ENCODE measurements at regions of chr17 and their contacts with region 1.

Region 1: GRCh38 chr17:49567871-49568694 is 7.6 kb upstream of the NXPH3 start:
- DNase-seq: peak; percentile 97 to 99
- H3K4me3 ChIP-seq: peak overlapping the region; percentile 41
- H3K4me3 Mint-ChIP-seq: peak overlapping the region; percentile 73
- H3K27ac Mint-ChIP-seq: no peak overlapping the region
- H3K4me1 ChIP-seq: peaks cover 4% of the 10 kb centered on the region
- H3K4me1 Mint-ChIP-seq: peaks cover 7% of the 10 kb centered on the region
- H3K27me3 ChIP-seq: no peaks in the 10 kb centered on the region; the same call in 1 of the 2 replicates
- H3K27me3 Mint-ChIP-seq: peaks cover 19% of the 10 kb centered on the region
- CTCF ChIP-seq: peak; percentile 99 to 100

Region 2: GRCh38 chr17:49361902-49362722 is 206.0 kb before region 1 on chr17 and contains the start of gene ZNF652:
- CTCF ChIA-PET with region 1: no interaction called
- POLR2A ChIA-PET with region 1: no interaction called
- intact Hi-C with region 1: no loop called
- DNase-seq: peak; percentile 100
- H3K4me3 ChIP-seq: peak within 1 kb of the TSS; percentile 64
- H3K4me3 Mint-ChIP-seq: peak within 1 kb of the TSS; percentile 77
- H3K27ac Mint-ChIP-seq: peak within 1 kb of the TSS; percentile 76
- H3K4me1 ChIP-seq: peaks cover 26% of the 10 kb centered on the region
- H3K4me1 Mint-ChIP-seq: peaks cover 27% of the 10 kb centered on the region
- H3K27me3 ChIP-seq: no peaks in the 10 kb centered on the region
- H3K27me3 Mint-ChIP-seq: no peaks in the 10 kb centered on the region
- CTCF ChIP-seq: no peak
- total RNA-seq, gene ZNF652: 89.3 and 92.6 TPM in 2 replicates

Region 3: GRCh38 chr17:49471089-49471683 is 96.9 kb before region 1 on chr17:
- CTCF ChIA-PET with region 1: no interaction called
- POLR2A ChIA-PET with region 1: no interaction called
- intact Hi-C with region 1: no loop called
- DNase-seq: no peak
- H3K4me3 ChIP-seq: no peak overlapping the region
- H3K4me3 Mint-ChIP-seq: no peak overlapping the region
- H3K27ac Mint-ChIP-seq: no peak overlapping the region
- H3K4me1 ChIP-seq: no peaks in the 10 kb centered on the region
- H3K4me1 Mint-ChIP-seq: no peaks in the 10 kb centered on the region
- H3K27me3 ChIP-seq: no peaks in the 10 kb centered on the region
- H3K27me3 Mint-ChIP-seq: peaks cover 27% of the 10 kb centered on the region
- CTCF ChIP-seq: no peak

Region 4: DNA sequence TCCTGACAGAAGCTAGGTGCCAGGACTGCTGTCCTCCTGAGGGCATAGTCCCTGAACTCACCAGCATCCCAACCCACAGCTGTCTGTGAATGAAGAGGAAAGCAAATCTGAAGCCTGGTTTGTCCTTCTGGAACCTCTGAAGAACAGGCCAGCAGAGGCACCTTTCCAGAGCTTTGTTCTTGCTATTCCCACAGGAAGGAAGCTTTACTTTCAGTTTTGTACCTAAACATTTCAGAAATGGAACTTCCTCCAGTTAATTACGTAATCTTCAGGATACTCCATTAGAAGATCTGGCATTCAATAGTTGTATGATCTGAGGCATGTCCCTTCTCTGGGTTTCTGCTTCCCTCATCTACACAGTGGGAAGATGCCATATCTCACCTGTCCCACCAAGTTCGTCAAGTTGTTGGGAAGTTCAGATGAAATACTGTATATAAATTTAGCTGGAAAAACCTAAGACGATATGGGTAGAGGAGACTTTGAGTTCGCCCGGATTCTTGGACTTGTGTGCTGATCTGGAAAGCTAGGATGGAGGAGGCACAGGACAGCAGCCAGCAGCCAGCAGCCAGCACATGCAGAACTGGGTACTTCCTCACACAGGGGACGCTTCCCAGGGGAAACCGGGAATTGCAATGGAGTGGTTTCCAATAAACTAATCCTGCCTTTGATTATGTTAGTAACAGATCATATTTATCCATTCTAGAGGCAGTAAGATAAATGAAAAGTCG is 30.0 kb after region 1 on chr17:
- CTCF ChIA-PET with region 1: interaction called, 14 read pairs
- POLR2A ChIA-PET with region 1: no interaction called
- intact Hi-C with region 1: no loop called
- DNase-seq: no peak
- H3K4me3 ChIP-seq: no peak overlapping the region
- H3K4me3 Mint-ChIP-seq: no peak overlapping the region
- H3K27ac Mint-ChIP-seq: no peak overlapping the region
- H3K4me1 ChIP-seq: peaks cover 4% of the 10 kb centered on the region; the same call in 1 of the 2 replicates
- H3K4me1 Mint-ChIP-seq: peaks cover 15% of the 10 kb centered on the region
- H3K27me3 ChIP-seq: no peaks in the 10 kb centered on the region
- H3K27me3 Mint-ChIP-seq: no peaks in the 10 kb centered on the region
- CTCF ChIP-seq: no peak

Region 5: DNA sequence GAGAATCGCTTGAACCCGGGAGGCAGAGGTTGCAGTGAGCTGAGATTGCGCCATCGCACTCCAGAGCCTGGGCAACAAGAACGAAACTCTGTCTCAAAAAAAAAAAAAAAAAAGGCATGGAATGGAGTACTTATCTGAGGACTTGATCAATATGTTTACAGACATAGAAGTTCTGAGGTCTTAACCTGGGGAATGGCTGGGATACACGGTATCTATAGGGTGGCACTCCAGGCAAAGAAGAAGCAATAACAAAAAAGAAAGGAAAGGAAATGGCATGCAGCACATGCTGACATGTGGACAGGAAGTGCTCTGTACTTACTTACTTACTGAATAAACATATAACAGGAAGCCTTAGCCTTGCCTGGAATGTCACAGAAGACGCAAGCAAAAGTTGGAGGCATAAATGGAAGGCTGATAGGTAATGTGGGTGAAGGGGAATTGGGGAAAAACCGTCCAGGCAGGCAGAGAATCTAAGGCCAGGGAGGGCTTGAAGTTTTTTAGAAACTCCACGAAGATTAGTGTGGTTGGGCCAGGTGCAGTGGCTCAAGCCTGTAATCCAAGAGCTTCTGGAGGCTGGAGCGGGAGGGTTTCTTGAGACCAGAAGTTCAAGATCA is 119.9 kb after region 1 on chr17:
- CTCF ChIA-PET with region 1: interaction called, 15 read pairs
- POLR2A ChIA-PET with region 1: no interaction called
- intact Hi-C with region 1: no loop called
- DNase-seq: peak in 1 of 2 experiments; percentile 38
- H3K4me3 ChIP-seq: no peak overlapping the region
- H3K4me3 Mint-ChIP-seq: no peak overlapping the region
- H3K27ac Mint-ChIP-seq: no peak overlapping the region
- H3K4me1 ChIP-seq: peaks cover 5% of the 10 kb centered on the region
- H3K4me1 Mint-ChIP-seq: peaks cover 7% of the 10 kb centered on the region
- H3K27me3 ChIP-seq: no peaks in the 10 kb centered on the region
- H3K27me3 Mint-ChIP-seq: peaks cover 7% of the 10 kb centered on the region
- CTCF ChIP-seq: no peak

Region 6: GRCh38 chr17:49707608-49708514 is 139.8 kb after region 1 on chr17 and contains the start of gene SLC35B1:
- CTCF ChIA-PET with region 1: interaction called, 32 read pairs
- POLR2A ChIA-PET with region 1: interaction called, 4 read pairs
- intact Hi-C with region 1: loop called (anchors 1 kb)
- DNase-seq: peak; percentile 100
- H3K4me3 ChIP-seq: peak within 1 kb of the TSS; percentile 69
- H3K4me3 Mint-ChIP-seq: peak within 1 kb of the TSS; percentile 89
- H3K27ac Mint-ChIP-seq: peak within 1 kb of the TSS; percentile 99
- H3K4me1 ChIP-seq: peaks cover 8% of the 10 kb centered on the region
- H3K4me1 Mint-ChIP-seq: peaks cover 28% of the 10 kb centered on the region
- H3K27me3 ChIP-seq: no peaks in the 10 kb centered on the region
- H3K27me3 Mint-ChIP-seq: no peaks in the 10 kb centered on the region
- CTCF ChIP-seq: peak; percentile 82 to 100
- total RNA-seq, gene SLC35B1: 228 and 232 TPM in 2 replicates

Region 7: GRCh38 chr17:49779739-49780231 is 211.7 kb after region 1 on chr17:
- CTCF ChIA-PET with region 1: interaction called, 5 read pairs
- POLR2A ChIA-PET with region 1: interaction called, 3 read pairs
- intact Hi-C with region 1: loop called (anchors 1 kb)
- DNase-seq: peak in 1 of 2 experiments; percentile 71
- H3K4me3 ChIP-seq: no peak overlapping the region
- H3K4me3 Mint-ChIP-seq: no peak overlapping the region
- H3K27ac Mint-ChIP-seq: no peak overlapping the region
- H3K4me1 ChIP-seq: peaks cover 4% of the 10 kb centered on the region; the same call in 1 of the 2 replicates
- H3K4me1 Mint-ChIP-seq: no peaks in the 10 kb centered on the region
- H3K27me3 ChIP-seq: no peaks in the 10 kb centered on the region
- H3K27me3 Mint-ChIP-seq: peaks cover 20% of the 10 kb centered on the region
- CTCF ChIP-seq: peak; percentile 91 to 94

Region 8: DNA sequence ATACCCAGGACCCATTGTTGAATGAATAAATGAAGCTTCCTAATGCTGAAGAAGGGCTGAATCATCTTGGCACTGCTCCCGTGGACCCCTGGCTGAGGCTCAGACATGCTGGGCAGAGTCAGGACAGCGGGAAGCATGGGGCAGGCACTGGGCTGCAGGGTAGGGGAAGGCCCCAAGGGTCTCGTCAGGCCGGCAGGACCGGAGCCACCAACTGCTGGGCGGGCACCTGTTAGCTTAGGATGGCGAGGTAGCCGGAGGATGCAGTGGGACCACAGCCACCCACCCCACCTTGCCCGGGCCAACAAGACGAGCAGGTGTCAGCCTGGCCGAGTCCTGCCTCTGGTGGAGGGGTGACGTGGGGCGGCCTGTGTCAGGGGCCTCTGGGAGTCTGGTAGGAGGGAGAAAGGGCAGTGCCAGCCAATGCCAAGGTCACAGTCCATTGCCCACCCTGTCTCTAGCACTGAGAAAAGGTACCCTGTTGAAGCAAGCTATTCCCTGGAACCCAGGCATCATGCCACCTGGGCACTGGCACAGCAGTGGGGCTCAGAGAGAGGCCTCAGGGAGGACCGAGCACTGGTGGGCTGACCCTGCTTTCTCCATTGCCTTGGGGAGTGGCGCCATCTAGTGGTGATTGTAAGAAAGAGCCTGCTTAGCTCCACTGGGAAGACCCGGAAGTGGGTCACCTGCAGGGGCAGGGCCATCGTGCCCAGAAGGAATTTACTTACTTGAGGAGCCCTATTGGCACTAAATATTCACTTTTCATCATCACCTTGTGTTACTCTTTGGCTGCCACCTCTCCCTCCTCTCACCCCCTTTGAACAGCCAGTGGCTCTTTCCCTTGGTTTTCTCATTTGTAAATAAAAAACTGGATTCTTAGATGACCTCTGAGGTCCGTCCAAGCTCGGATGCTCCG is 430.0 kb after region 1 on chr17:
- CTCF ChIA-PET with region 1: no interaction called
- POLR2A ChIA-PET with region 1: no interaction called
- intact Hi-C with region 1: loop called (anchors 5 kb)
- DNase-seq: peak; percentile 76 to 82
- H3K4me3 ChIP-seq: no peak overlapping the region
- H3K4me3 Mint-ChIP-seq: peak overlapping the region; percentile 31
- H3K27ac Mint-ChIP-seq: no peak overlapping the region
- H3K4me1 ChIP-seq: no peaks in the 10 kb centered on the region
- H3K4me1 Mint-ChIP-seq: peaks cover 14% of the 10 kb centered on the region
- H3K27me3 ChIP-seq: no peaks in the 10 kb centered on the region
- H3K27me3 Mint-ChIP-seq: peaks cover 14% of the 10 kb centered on the region
- CTCF ChIP-seq: peak; percentile 63 to 72